HEK293 (cell line): ENCODE measurements at regions of chr15 and their contacts with region 1.

Region 1: GRCh38 chr15:88246666-88247446 is 9.7 kb downstream of the NTRK3 start:
- H3K4me3 ChIP-seq: no peak overlapping the region
- H3K27ac ChIP-seq: no peak overlapping the region
- H3K4me1 ChIP-seq: no peaks in the 10 kb centered on the region
- CTCF ChIP-seq: peak; percentile 85

Region 2: DNA sequence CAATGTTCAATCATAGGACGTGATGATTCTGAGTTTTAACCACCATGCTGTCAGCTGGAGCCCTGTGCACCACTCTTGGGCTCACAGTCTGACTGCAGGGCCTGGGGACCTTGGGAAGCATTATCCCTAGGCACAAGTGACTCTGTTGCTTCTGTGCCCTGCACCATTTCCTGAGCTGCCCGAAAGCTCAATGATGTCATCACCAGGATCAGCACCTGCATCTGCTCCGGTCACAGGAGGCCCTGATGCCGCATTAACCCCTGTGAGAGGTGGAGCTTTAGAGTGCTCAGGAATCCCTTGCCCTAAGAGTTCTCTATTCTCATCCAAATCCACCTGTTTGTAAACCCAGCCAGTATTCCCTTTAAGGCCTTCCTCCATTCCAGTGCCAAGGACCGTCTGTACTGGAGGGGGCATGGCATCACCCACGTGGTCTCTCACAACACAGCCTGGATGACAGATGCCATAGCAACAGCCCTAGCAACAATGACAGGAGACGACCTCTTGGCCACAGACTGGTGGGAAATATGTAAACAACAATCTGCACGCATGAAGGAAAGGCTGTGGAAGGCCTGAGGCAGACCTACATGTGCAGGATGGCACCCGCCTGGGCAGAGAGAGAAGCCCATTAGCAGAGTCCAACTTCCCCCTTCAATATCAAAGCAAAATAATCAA is 28.2 kb before region 1 on chr15:
- CTCF ChIA-PET with region 1: interaction called, 56 read pairs
- POLR2A ChIA-PET with region 1: no interaction called
- H3K4me3 ChIP-seq: no peak overlapping the region
- H3K27ac ChIP-seq: no peak overlapping the region
- H3K4me1 ChIP-seq: no peaks in the 10 kb centered on the region
- CTCF ChIP-seq: no peak

Region 3: GRCh38 chr15:88258093-88258641 is 11.3 kb after region 1 on chr15:
- CTCF ChIA-PET with region 1: interaction called, 17 read pairs
- POLR2A ChIA-PET with region 1: interaction called, 3 read pairs
- H3K4me3 ChIP-seq: no peak overlapping the region
- H3K27ac ChIP-seq: no peak overlapping the region
- H3K4me1 ChIP-seq: no peaks in the 10 kb centered on the region; the same call in 1 of the 2 replicates
- CTCF ChIP-seq: no peak

Region 4: GRCh38 chr15:88274553-88275460 is 28.0 kb after region 1 on chr15:
- CTCF ChIA-PET with region 1: interaction called, 182 read pairs
- POLR2A ChIA-PET with region 1: no interaction called
- H3K4me3 ChIP-seq: no peak overlapping the region
- H3K27ac ChIP-seq: no peak overlapping the region
- H3K4me1 ChIP-seq: no peaks in the 10 kb centered on the region
- CTCF ChIP-seq: peak; percentile 66

Region 5: GRCh38 chr15:88382482-88382983 is 135.7 kb after region 1 on chr15:
- CTCF ChIA-PET with region 1: no interaction called
- POLR2A ChIA-PET with region 1: no interaction called
- H3K4me3 ChIP-seq: no peak overlapping the region
- H3K27ac ChIP-seq: no peak overlapping the region
- H3K4me1 ChIP-seq: no peaks in the 10 kb centered on the region
- CTCF ChIP-seq: no peak

Region 6: GRCh38 chr15:88454867-88455810 is 208.3 kb after region 1 on chr15:
- CTCF ChIA-PET with region 1: interaction called, 110 read pairs
- POLR2A ChIA-PET with region 1: no interaction called
- H3K4me3 ChIP-seq: no peak overlapping the region
- H3K27ac ChIP-seq: no peak overlapping the region
- H3K4me1 ChIP-seq: no peaks in the 10 kb centered on the region
- CTCF ChIP-seq: peak; percentile 82